ENCODE measurements at regions of chr16 and their contacts with region 1.

Region 1: DNA sequence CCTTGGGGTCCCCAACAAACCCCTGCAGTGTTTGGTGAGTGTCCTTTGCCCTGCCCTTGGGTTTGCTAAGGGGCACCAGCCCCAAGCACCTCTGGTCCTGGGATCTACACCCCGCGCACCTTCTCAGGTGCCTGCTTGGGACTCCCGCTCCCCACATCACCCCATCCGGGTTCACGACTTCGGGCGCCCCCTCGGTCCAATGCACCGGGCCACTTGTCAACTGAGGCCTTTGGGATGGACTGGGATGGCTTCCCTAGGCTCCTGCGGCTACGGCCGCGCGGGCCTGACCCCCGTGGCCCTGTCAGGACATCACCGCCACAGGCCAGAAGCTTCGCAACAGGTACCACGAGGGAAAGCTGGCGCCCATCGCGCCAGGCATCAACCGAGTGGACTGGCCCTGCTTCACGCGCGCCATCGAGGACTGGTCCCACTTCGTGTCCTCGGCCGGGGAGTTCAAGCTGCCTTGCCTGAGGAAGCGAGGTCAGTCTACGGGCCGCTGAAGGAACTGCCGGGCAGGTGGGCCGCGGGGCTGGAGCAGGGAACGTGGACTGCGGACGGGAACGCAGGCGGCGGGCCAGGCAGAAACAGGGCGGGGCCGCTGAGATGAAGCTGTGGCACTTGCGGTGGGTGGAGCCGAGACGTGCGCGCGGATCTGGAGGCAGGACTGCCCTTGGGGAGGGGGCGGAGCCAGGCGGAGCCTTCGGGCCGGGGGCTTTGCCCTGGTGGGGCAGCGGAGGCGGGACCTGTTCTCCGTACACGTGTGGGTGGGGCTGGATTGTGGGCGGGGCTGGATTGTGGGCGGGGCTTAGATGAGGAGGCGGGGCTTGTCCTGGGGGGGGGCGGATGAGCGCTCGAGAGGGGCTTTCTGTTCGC is 13.6 kb upstream of the CNGB1 start:
- DNase-seq: peak; percentile 79 to 97 (median 90)
- ATAC-seq: peak; percentile 95 to 96
- H3K4me3 Mint-ChIP-seq: peak overlapping the region; percentile 87 to 97 (median 92)
- H3K27ac Mint-ChIP-seq: peak overlapping the region in 9 of 10 donors; percentile 45 to 94 (median 90)
- H3K4me1 Mint-ChIP-seq: peaks cover 3 to 22% (median 18%) of the 10 kb centered on the region in 4 donors
- H3K27me3 Mint-ChIP-seq: no peaks in the 10 kb centered on the region

Region 2: DNA sequence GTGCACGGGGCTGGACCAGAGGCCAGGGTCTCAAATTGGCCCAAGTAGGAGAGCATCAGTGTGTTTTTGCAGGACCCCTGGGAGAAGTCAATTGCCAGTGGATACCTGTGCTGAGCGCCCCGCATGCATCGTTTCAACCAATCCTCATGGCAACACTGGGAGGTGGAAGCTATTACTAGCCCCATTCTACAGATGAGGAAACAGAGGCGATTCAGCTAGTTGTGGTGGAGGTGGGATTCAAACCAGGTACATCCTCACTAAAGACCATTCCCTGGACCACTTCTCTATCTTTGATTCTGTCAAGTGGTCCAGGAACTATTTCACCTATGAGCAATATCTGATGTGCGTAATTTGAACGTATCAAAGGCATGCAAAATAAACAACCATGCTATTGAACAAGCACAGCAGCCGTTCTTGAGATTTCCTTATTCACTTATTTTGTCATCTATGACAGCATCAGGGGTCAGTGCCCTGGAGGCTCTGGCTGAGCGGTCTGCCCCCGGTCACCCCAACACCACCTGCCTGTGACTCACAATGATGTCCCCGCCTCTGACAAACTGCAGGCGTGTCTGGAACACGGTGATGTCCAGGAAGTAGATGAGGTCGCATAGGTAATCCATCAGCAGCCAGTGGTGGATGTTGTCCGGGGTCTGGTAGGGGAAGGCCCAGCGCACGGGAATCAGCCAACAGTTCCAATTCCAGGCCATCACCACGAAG is 67.7 kb before region 1 on chr16:
- POLR2A ChIA-PET with region 1: no interaction called
- DNase-seq: no peak
- ATAC-seq: no peak
- H3K4me3 Mint-ChIP-seq: no peak overlapping the region
- H3K27ac Mint-ChIP-seq: no peak overlapping the region
- H3K4me1 Mint-ChIP-seq: peaks cover 0 to 3% (median under 1%) of the 10 kb centered on the region in 4 donors
- H3K27me3 Mint-ChIP-seq: peaks cover 0 to 6% (median 3%) of the 10 kb centered on the region in 5 donors

Region 3: GRCh38 chr16:57955572-57956188 is 28.9 kb before region 1 on chr16:
- POLR2A ChIA-PET with region 1: no interaction called
- DNase-seq: no peak
- ATAC-seq: no peak
- H3K4me3 Mint-ChIP-seq: no peak overlapping the region
- H3K27ac Mint-ChIP-seq: no peak overlapping the region
- H3K4me1 Mint-ChIP-seq: no peaks in the 10 kb centered on the region
- H3K27me3 Mint-ChIP-seq: peaks cover 0 to 4% (median 0%) of the 10 kb centered on the region in 5 donors

Region 4: DNA sequence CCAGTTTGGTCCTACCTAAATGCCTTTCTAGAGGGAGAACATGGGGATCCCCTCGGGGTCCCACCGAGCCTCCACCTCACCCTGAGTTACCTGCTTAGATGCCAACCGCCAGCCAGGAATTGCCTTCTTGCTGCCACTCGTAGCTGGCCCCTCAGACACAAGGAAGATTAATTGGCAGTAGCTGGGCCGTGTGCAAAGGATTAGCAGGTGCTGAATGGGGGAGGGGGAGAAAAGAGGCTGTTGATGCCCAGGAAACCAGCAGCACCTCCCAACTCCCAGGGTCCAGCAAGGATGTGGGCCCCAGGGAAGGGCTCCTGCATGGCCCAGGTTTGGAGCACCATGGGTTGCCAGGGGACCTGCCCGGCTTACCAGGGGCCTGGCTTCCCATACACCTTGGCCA is 13.6 kb before region 1 on chr16 and contains the start of gene CNGB1:
- POLR2A ChIA-PET with region 1: no interaction called
- DNase-seq: no peak
- ATAC-seq: no peak
- H3K4me3 Mint-ChIP-seq: no peak within 1 kb of the TSS
- H3K27ac Mint-ChIP-seq: peak within 1 kb of the TSS in 1 of 10 donors; percentile 38
- H3K4me1 Mint-ChIP-seq: peaks cover 0 to 8% (median under 1%) of the 10 kb centered on the region in 4 donors
- H3K27me3 Mint-ChIP-seq: peaks cover 0 to 1% (median 0%) of the 10 kb centered on the region in 5 donors
- polyA plus RNA-seq, gene CNGB1: not detected

Region 5: DNA sequence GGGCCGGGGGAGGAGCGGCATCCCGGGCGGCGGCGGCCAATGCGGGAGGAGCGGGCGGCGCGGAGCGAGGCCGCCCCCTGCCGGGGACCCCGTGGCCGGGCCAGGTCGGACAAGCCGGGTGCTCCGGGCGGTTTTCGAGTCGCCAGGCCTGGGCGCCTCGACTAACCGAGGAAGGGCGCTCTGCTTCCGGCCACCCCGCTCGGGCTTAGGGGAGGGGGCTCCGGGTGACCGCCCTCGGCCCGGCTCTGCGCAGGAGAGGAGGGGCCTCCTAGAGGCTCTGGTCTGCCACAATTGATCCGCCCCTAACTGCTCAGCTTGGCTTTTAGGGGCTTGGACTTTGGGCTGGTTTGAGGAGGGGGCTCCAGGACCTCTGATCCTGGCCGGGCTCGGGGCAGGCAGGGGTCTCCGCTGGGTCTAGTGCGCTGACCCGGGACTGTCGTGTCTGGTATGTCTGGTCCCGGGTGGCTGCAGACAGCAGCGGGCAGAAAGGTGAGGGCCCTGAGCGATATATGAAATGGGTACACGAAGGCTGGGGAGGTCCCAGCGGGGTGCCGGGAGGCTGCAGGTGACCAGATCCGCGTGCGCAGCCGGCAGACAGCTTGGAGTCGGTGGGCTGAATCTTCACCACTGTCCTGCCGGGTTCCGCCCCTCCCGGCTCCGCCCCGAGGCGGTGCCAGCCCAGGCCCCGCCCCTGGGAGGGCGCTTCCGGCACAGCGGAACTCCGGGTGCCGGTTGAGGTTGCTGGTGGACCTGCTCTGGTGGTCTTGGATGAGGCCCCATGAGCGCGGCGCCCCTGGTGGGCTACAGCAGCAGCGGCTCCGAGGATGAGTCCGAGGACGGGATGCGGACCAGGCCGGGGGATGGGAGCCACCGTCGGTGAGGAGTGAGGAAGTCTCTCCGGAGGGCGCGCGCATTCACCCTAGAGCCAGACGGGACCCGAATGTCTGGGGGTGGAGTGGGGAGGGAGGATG is 16.4 kb after region 1 on chr16 and contains the start of gene USB1:
- POLR2A ChIA-PET with region 1: interaction called, 26 read pairs
- DNase-seq: peak; percentile 73 to 90 (median 88)
- ATAC-seq: peak; percentile 75 to 76
- H3K4me3 Mint-ChIP-seq: peak within 1 kb of the TSS; percentile 88 to 96 (median 91)
- H3K27ac Mint-ChIP-seq: peak within 1 kb of the TSS; percentile 79 to 97 (median 91)
- H3K4me1 Mint-ChIP-seq: peaks cover 26 to 67% (median 63%) of the 10 kb centered on the region in 4 donors
- H3K27me3 Mint-ChIP-seq: no peaks in the 10 kb centered on the region
- polyA plus RNA-seq, gene USB1: 31.1 to 36.4 (median 32.8) TPM

Region 6: DNA sequence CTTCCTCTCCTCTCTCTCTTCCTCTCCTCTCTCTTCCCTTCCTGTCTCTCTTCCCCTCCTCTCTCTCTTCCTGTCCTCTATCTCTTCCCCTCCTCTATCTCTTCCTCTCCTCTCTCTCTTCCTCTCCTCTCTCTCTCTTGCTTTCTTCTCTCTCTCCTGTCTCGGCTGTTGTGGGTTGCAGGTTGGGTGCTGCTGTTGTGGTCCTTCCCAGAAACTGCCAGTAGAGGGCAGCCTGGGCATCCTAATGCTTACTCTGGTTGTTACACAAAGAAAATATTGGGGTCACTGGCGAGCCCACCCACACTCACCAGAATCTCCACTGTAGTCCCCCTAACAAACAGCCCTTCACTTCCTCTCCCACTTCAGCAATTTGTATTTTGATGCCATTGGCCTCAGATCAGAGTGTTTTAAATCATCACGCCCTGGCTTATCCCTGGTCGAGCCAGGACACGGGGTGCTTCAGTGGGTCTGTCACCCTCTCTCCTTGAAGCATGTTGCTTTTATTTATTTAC is 36.1 kb after region 1 on chr16:
- POLR2A ChIA-PET with region 1: no interaction called
- DNase-seq: peak; percentile 44 to 83 (median 60)
- ATAC-seq: peak; percentile 60 to 73
- H3K4me3 Mint-ChIP-seq: peak overlapping the region in 4 of 10 donors; percentile 3 to 54 (median 30)
- H3K27ac Mint-ChIP-seq: peak overlapping the region; percentile 48 to 90 (median 84)
- H3K4me1 Mint-ChIP-seq: peaks cover 11 to 32% (median 24%) of the 10 kb centered on the region in 4 donors
- H3K27me3 Mint-ChIP-seq: peaks cover 0 to 2% (median 0%) of the 10 kb centered on the region in 5 donors

Measured in naive thymus-derived CD8-positive, alpha-beta T cell (primary cell).